ENCODE measurements at regions of chr9 and their contacts with region 1.

Region 1: GRCh38 chr9:32550562-32551433 is 1.3 kb upstream of the SMIM27 start:
- DNase-seq: peak; percentile 95
- H3K4me3 Mint-ChIP-seq: peak overlapping the region; percentile 99
- H3K27ac Mint-ChIP-seq: peak overlapping the region; percentile 100
- H3K4me1 Mint-ChIP-seq: peaks cover 48% of the 10 kb centered on the region
- H3K27me3 Mint-ChIP-seq: no peaks in the 10 kb centered on the region

Region 2: GRCh38 chr9:32384364-32385151 is 166.2 kb before region 1 on chr9 and contains the start of gene ACO1:
- CTCF ChIA-PET with region 1: interaction called, 17 read pairs
- POLR2A ChIA-PET with region 1: interaction called, 8 read pairs
- intact Hi-C with region 1: loop called (anchors 1 kb)
- DNase-seq: peak; percentile 87
- H3K4me3 Mint-ChIP-seq: peak within 1 kb of the TSS; percentile 79
- H3K27ac Mint-ChIP-seq: no peak within 1 kb of the TSS
- H3K4me1 Mint-ChIP-seq: peaks cover 15% of the 10 kb centered on the region
- H3K27me3 Mint-ChIP-seq: peaks cover 5% of the 10 kb centered on the region
- total RNA-seq, gene ACO1: 13.1 to 13.7 TPM

Region 3: DNA sequence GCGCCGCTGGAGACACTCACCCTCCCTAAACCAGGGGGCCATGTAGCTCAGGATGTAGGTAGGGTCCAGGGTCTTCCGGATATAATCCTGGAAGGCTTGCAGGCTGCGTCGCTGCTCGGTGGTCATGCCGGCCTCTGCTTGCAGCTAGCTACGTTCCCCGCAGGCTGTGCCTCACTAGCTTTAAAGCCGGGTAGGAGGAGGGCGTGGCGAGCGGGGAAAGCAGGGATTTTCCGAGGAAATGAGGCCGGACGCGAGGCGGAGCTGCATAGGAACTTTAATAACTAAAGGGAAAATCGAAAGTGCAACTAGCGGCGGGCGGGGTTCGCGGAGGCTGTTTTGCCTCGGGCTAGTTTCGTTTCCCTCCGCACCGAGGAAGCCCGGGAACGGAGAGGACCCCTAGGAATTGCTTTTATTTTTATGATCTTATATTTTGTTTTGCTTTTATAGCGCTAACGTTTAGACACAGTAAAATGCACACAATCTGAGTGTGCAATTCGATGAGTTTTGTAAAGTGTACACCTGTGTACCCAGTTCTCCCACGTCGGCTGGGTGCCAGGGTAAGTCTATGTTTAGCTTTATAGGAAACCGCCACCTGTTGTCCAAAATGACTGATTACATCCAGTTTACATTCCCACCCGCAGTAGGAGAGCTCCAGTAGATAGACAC is 24.6 kb before region 1 on chr9 and contains the start of gene RIGI:
- CTCF ChIA-PET with region 1: interaction called, 12 read pairs
- POLR2A ChIA-PET with region 1: interaction called, 31 read pairs
- intact Hi-C with region 1: loop called (anchors 1 kb)
- DNase-seq: peak; percentile 89
- H3K4me3 Mint-ChIP-seq: peak within 1 kb of the TSS; percentile 82
- H3K27ac Mint-ChIP-seq: peak within 1 kb of the TSS; percentile 81
- H3K4me1 Mint-ChIP-seq: peaks cover 41% of the 10 kb centered on the region
- H3K27me3 Mint-ChIP-seq: no peaks in the 10 kb centered on the region
- total RNA-seq, gene RIGI: 10.6 to 11.7 TPM

Region 4: GRCh38 chr9:33024966-33025571 is 474.3 kb after region 1 on chr9 and contains the start of gene DNAJA1:
- CTCF ChIA-PET with region 1: no interaction called
- POLR2A ChIA-PET with region 1: interaction called, 5 read pairs
- intact Hi-C with region 1: loop called (anchors 1 kb)
- DNase-seq: peak; percentile 96
- H3K4me3 Mint-ChIP-seq: peak within 1 kb of the TSS; percentile 98
- H3K27ac Mint-ChIP-seq: peak within 1 kb of the TSS; percentile 95
- H3K4me1 Mint-ChIP-seq: peaks cover 57% of the 10 kb centered on the region
- H3K27me3 Mint-ChIP-seq: no peaks in the 10 kb centered on the region
- total RNA-seq, gene DNAJA1: 173 to 184 TPM

Region 5: DNA sequence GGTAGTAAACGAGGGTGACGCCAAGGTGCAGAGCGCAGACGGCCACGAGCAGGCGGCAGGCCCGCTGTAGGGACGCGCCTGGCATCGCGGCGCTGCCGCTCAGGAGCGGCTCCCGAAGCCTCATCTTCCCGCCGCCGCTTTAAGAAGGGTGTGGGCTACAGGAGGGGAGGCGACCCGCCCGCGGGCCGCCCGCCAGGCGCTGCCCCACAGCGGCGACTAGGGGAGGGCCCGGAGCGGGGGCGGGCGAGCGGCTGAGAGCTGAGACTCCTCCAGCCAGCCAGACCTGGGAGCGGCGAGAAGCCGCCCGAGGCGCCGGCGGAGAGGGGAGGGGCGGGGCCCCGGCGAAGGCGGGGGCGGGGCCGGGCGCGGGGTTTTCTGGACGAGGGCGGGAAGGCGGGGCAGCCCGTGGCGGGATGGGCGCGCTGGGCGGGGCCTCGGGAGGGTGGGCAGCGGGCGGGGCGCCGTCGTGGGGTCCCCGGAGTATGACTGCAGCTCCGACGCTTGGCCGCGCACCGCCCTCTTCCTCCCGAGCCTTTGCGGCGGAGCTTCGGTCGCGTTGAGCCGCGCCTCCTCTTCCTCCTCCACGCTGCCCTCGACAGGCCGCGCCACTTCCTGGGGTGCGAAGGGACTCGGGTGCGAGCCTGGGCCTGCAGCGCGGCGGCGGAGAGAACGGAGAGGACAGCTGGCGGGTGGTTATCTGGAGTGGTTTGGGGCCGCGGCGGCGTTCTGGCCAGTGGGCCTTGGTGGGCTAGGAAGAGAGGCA is 616.4 kb after region 1 on chr9 and contains the start of gene B4GALT1:
- CTCF ChIA-PET with region 1: no interaction called
- POLR2A ChIA-PET with region 1: no interaction called
- intact Hi-C with region 1: loop called (anchors 1 kb)
- DNase-seq: peak; percentile 98
- H3K4me3 Mint-ChIP-seq: peak within 1 kb of the TSS; percentile 95
- H3K27ac Mint-ChIP-seq: peak within 1 kb of the TSS; percentile 97
- H3K4me1 Mint-ChIP-seq: peaks cover 48% of the 10 kb centered on the region
- H3K27me3 Mint-ChIP-seq: no peaks in the 10 kb centered on the region
- total RNA-seq, gene B4GALT1: 76.6 to 78.0 TPM

Measured in activated CD4-positive, alpha-beta memory T cell treated with anti-CD3 and anti-CD28 coated beads for 36 hours (primary cell).